AG04450 (cell line): ENCODE measurements at regions of chr13 and their contacts with region 1.

Region 1: DNA sequence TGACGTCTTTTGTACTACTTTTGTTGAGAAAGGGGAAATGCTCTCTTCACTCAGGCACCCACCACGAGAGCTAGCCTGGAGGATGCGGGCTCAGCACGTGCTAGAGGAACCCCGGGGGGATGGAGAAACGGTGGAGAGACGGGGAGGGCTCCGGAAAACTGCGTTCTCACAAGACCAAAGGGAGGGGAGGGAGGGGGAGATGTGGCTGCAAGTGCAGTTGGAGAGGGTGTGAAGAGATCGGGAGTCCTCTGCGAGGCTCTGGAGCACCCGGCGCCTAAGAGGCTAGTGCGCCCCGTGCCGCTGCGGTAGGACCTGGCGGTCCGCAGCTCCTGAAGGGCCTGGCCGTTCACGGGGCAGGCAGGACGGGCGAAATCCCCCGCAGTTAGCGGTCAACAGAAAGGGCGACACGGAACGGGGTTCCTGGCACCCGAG is 43.4 kb upstream of the XPO4 start:
- DNase-seq: no peak
- H3K4me3 ChIP-seq: no peak overlapping the region
- H3K27ac ChIP-seq: no peak overlapping the region
- H3K27me3 ChIP-seq: no peaks in the 10 kb centered on the region
- CTCF ChIP-seq: no peak

Region 2: DNA sequence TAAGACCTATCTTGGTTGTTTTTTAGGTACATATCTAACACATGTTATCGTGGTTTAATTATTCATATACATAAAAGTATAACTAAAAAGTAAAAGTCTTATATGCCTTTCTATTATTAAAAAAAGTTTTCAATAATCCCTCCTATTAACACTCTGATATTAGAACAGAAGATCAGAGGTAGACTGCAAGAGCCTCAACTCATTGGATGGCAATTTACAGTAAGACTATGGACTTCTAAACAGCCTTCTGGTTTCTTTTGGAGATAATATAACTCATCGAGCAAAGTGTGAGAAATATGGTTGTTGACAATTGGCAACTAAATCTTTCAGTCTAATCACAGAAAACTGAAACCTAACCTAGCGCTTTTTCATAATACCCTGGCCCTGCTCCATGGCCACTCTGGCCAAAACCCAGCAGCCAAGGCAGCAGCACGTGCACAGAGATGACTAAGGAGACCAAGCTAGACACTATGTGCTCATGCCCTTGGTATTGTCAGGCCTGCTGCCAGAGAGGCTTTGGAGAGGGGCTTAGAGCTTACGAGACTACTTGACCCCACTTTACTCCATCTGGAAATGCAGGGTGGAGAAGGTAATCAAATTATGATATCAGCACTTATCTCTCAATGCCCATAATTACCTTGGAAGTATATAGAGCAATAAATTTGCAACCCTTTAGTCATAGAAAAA is 131.6 kb before region 1 on chr13:
- CTCF ChIA-PET with region 1: no interaction called
- POLR2A ChIA-PET with region 1: no interaction called
- DNase-seq: peak; percentile 91
- H3K4me3 ChIP-seq: peak overlapping the region; percentile 35
- H3K27ac ChIP-seq: peak overlapping the region; percentile 77
- H3K27me3 ChIP-seq: no peaks in the 10 kb centered on the region
- CTCF ChIP-seq: no peak

Region 3: DNA sequence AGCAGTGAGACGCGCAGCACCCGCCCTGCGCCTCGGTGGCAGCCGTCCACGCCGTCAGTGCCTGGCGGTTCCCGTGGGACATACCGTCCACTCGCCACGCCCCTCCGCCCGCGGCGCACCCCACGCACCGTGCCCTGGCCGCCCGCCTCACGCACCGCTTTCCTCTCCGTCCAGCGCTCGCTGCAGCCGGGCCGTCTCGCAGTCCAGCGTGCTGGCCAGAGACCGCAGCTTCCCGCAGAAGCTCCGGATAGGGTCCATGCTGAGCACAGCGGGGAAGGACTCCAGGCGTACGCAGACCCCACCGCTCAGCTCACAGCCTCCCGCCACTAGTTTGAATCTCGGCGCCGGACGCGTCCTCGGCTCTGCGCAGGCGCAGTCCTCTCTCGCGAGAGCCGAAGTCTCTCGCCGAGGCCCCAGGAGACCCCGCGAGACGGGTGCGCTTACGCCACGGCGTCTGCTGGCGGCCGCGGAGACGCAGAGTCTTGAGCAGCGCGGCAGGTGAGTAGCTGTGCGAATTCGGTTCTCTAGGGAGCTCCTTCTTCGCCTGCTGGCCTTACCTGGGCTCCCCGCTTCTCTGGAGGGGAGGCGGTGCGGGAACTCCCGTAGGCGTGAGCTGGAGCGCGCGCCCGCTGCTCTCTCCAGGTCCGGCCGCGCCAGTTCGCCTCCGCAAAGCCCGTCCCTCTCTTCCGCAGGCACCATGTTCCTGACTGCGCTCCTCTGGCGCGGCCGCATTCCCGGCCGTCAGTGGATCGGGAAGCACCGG is 230.4 kb after region 1 on chr13 and contains the starts of genes MRPL57 and SKA3:
- CTCF ChIA-PET with region 1: interaction called, 10 read pairs
- POLR2A ChIA-PET with region 1: interaction called, 6 read pairs
- DNase-seq: peak; percentile 87
- H3K4me3 ChIP-seq: peak within 1 kb of the TSS; percentile 86
- H3K27ac ChIP-seq: peak within 1 kb of the TSS; percentile 87
- H3K27me3 ChIP-seq: no peaks in the 10 kb centered on the region
- CTCF ChIP-seq: no peak
- polyA plus RNA-seq, gene MRPL57: 14.6 and 15.6 TPM in 2 replicates
- polyA plus RNA-seq, gene SKA3: 4.3 and 7.3 TPM in 2 replicates